ENCODE measurements at regions of chr19 and their contacts with region 1.

Region 1: DNA sequence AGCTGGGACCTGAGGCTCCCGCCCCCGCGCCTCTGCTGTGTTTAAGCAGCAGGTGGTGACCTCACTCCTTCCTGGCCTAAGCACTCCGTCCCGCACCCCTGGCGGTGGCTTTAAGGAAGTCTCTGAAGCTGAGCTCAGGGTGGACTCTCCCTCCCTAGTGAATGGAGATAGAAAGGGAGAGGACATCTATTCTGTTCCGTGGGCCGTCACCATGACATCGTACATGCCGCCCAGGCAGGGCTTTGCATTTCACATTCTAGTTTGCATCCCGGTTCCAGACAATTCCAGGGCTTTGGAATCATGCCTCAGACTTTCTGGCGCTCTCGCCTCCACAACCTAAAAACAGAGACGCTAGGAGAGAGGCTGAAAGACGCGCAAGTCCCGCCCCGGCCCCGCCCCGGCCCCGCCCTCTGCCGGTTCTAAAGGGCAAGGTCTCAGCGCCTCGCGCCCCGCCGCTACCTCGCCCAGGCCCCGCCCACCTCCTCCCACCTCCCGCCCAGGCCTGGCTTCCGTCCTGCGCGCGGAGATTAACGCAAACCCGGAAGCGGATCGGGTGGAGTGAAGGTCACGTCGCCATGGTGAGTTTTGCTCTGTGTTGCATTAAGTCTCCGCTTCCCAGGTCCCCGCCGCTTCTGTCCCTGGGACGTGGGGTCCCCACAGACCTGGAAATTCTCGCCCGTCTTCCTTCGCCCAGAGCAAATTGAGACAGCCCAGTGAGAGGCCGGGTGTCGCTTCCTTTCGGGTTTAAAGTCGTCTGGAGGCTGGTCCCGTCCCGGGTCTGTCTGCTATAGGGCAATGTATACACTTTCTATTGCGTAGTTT is at the start of gene ZNF808:
- DNase-seq: peak; percentile 96 to 98 (median 97)
- ATAC-seq: peak; percentile 95
- H3K4me3 ChIP-seq: peak within 1 kb of the TSS; percentile 78 to 98
- H3K4me3 Mint-ChIP-seq: peak within 1 kb of the TSS; percentile 98
- H3K27ac ChIP-seq: peak within 1 kb of the TSS; percentile 89 to 97
- H3K27ac Mint-ChIP-seq: peak within 1 kb of the TSS; percentile 99
- H3K4me1 ChIP-seq: peaks cover 13% of the 10 kb centered on the region
- H3K4me1 Mint-ChIP-seq: peaks cover 29% of the 10 kb centered on the region
- H3K27me3 ChIP-seq: no peaks in the 10 kb centered on the region
- H3K27me3 Mint-ChIP-seq: no peaks in the 10 kb centered on the region
- CTCF ChIP-seq: peak; percentile 33
- total RNA-seq, gene ZNF808: 16.4 to 19.2 TPM

Region 2: GRCh38 chr19:52296773-52297600 is 230.4 kb before region 1 on chr19 and contains the start of gene ZNF480:
- CTCF ChIA-PET with region 1: no interaction called
- POLR2A ChIA-PET with region 1: no interaction called
- intact Hi-C with region 1: loop called in 1 of 2 experiments (anchors 2 kb)
- DNase-seq: peak; percentile 73 to 94 (median 89)
- ATAC-seq: peak; percentile 92
- H3K4me3 ChIP-seq: peak within 1 kb of the TSS; percentile 96 to 97
- H3K4me3 Mint-ChIP-seq: peak within 1 kb of the TSS; percentile 97
- H3K27ac ChIP-seq: peak within 1 kb of the TSS; percentile 93 to 98
- H3K27ac Mint-ChIP-seq: peak within 1 kb of the TSS; percentile 99
- H3K4me1 ChIP-seq: peaks cover 7% of the 10 kb centered on the region
- H3K4me1 Mint-ChIP-seq: peaks cover 20% of the 10 kb centered on the region
- H3K27me3 ChIP-seq: no peaks in the 10 kb centered on the region
- H3K27me3 Mint-ChIP-seq: no peaks in the 10 kb centered on the region
- CTCF ChIP-seq: no peak
- total RNA-seq, gene ZNF480: 7.8 to 9.1 TPM

Region 3: DNA sequence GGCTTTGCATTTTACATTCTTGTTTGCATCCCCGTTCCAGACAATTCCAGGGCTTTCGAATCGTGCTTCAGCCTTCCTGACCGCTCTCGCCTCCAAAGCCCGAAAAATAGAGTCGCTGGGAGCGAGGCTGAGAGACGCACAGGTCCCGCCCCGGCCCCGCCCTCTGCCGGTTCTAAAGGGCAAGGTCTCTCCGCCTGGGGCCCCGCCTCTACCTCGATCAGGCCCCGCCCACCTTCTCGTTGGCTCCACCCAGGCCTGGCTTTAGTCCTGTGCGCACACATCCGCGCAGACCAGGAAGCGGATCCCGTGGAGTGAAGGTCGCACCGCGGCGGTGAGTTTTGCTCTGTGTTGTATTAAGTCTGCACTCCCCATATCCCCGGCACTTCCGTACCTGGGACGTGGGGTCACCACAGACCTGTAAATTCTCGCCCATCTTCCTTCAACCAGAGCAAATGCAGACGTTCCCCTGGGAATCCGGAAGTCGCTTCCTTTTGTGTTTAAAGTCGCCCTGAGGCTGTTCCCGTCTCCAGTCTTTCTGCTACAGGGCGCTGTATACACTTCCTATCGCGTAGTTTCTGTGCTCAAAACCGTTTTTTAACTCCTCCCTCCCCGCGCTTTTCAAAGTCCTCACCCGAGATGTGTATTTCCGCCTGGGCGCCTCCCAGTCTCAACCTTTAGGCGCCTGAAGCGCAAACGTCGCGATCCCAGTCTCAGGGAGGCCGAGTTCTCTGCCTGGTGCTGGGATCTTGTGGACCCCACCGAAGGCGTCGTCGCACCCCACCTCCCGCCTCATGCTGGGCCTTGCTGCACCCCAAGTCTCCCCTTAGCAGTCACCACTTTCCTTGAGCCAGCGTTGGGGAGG is 42.9 kb after region 1 on chr19 and contains the start of gene ZNF701:
- CTCF ChIA-PET with region 1: no interaction called
- POLR2A ChIA-PET with region 1: no interaction called
- intact Hi-C with region 1: loop called (anchors 1 to 2 kb)
- DNase-seq: peak; percentile 93 to 97 (median 95)
- ATAC-seq: peak; percentile 98
- H3K4me3 ChIP-seq: peak within 1 kb of the TSS; percentile 81 to 96
- H3K4me3 Mint-ChIP-seq: peak within 1 kb of the TSS; percentile 90
- H3K27ac ChIP-seq: peak within 1 kb of the TSS; percentile 77 to 91
- H3K27ac Mint-ChIP-seq: peak within 1 kb of the TSS; percentile 93
- H3K4me1 ChIP-seq: peaks cover 12% of the 10 kb centered on the region
- H3K4me1 Mint-ChIP-seq: peaks cover 42% of the 10 kb centered on the region
- H3K27me3 ChIP-seq: no peaks in the 10 kb centered on the region
- H3K27me3 Mint-ChIP-seq: no peaks in the 10 kb centered on the region
- CTCF ChIP-seq: peak; percentile 30
- total RNA-seq, gene ZNF701: 11.2 to 11.9 TPM

Region 4: GRCh38 chr19:52637718-52638585 is 110.6 kb after region 1 on chr19 and contains the start of gene ZNF83:
- CTCF ChIA-PET with region 1: no interaction called
- POLR2A ChIA-PET with region 1: no interaction called
- intact Hi-C with region 1: loop called (anchors 1 kb)
- DNase-seq: peak; percentile 85 to 96 (median 91)
- ATAC-seq: peak; percentile 95
- H3K4me3 ChIP-seq: peak within 1 kb of the TSS; percentile 68 to 97
- H3K4me3 Mint-ChIP-seq: peak within 1 kb of the TSS; percentile 95
- H3K27ac ChIP-seq: peak within 1 kb of the TSS; percentile 90 to 99
- H3K27ac Mint-ChIP-seq: peak within 1 kb of the TSS; percentile 98
- H3K4me1 ChIP-seq: peaks cover 14% of the 10 kb centered on the region
- H3K4me1 Mint-ChIP-seq: peaks cover 26% of the 10 kb centered on the region
- H3K27me3 ChIP-seq: no peaks in the 10 kb centered on the region
- H3K27me3 Mint-ChIP-seq: no peaks in the 10 kb centered on the region
- CTCF ChIP-seq: no peak
- total RNA-seq, gene ZNF83: 49.4 to 51.2 TPM

Region 5: DNA sequence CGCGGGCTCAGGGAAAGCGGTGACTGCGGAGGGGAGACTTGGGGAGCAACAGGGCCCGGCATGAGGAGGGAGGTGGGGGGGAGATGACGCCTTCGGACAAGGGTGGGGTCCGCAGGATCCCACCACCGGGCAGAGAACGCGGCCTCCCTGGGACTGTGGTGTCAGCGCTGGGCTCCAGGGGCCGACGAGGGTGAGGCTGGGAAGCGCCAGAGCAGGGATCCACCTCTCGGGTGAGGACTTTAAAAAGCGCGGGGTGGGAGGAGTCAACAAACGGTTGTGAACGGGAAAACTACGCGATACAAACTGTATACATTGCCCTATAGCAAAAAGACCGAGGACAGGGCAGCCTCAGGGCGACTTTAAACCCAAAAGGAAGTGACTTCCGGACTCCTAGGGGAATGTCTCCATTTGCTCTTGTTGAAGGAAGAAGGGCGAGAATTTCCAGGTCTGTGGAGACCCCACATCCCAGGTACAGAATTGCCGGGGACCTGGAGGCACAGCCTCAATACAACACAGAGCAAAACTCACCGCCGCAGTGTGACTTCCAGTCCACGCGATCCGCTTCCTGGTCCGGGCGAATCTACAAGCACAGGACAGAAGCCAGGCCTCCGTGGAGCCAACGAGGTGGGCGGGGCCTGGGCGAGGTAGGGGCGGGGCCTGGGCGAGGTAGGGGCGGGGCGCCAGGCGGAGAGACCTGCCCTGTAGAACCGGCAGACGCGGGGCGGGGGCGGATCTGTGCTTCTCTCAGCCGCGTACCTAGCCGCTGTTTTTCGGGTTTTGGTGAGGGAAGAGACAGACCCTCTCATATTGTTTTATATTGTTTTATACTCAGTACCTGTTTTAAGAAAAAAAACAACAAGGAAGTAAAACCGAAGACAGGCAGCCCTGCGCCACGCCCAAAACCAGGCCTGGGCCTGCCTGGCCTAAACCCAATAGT is 395.8 kb after region 1 on chr19 and contains the start of gene ZNF888:
- CTCF ChIA-PET with region 1: no interaction called
- POLR2A ChIA-PET with region 1: no interaction called
- intact Hi-C with region 1: loop called in 1 of 2 experiments (anchors 1 kb)
- DNase-seq: peak; percentile 74 to 90 (median 82)
- ATAC-seq: peak; percentile 100
- H3K4me3 ChIP-seq: peak within 1 kb of the TSS; percentile 93 to 97
- H3K4me3 Mint-ChIP-seq: peak within 1 kb of the TSS; percentile 94
- H3K27ac ChIP-seq: peak within 1 kb of the TSS; percentile 62 to 75
- H3K27ac Mint-ChIP-seq: peak within 1 kb of the TSS; percentile 90
- H3K4me1 ChIP-seq: peaks cover 14% of the 10 kb centered on the region
- H3K4me1 Mint-ChIP-seq: peaks cover 33% of the 10 kb centered on the region
- H3K27me3 ChIP-seq: no peaks in the 10 kb centered on the region
- H3K27me3 Mint-ChIP-seq: no peaks in the 10 kb centered on the region
- CTCF ChIP-seq: no peak
- total RNA-seq, gene ZNF888: 4.5 to 4.9 TPM

Region 6: GRCh38 chr19:53467485-53468262 is 940.3 kb after region 1 on chr19 and contains the start of gene ZNF813:
- CTCF ChIA-PET with region 1: no interaction called
- POLR2A ChIA-PET with region 1: no interaction called
- intact Hi-C with region 1: loop called in 1 of 2 experiments (anchors 1 kb)
- DNase-seq: peak; percentile 93 to 98 (median 95)
- ATAC-seq: peak; percentile 98
- H3K4me3 ChIP-seq: peak within 1 kb of the TSS; percentile 73 to 91
- H3K4me3 Mint-ChIP-seq: peak within 1 kb of the TSS; percentile 92
- H3K27ac ChIP-seq: peak within 1 kb of the TSS; percentile 64 to 79
- H3K27ac Mint-ChIP-seq: peak within 1 kb of the TSS; percentile 89
- H3K4me1 ChIP-seq: peaks cover 7% of the 10 kb centered on the region
- H3K4me1 Mint-ChIP-seq: peaks cover 26% of the 10 kb centered on the region
- H3K27me3 ChIP-seq: no peaks in the 10 kb centered on the region
- H3K27me3 Mint-ChIP-seq: peaks cover 18% of the 10 kb centered on the region
- CTCF ChIP-seq: no peak
- total RNA-seq, gene ZNF813: 3.8 TPM